CD8-positive, alpha-beta memory T cell (primary cell): ENCODE measurements at regions of chr2 and their contacts with region 1.

Region 1: GRCh38 chr2:134927195-134927594 is 8.6 kb downstream of the CCNT2 start:
- DNase-seq: no peak
- H3K4me3 ChIP-seq: no peak overlapping the region
- H3K4me3 Mint-ChIP-seq: peak overlapping the region in 4 of 7 donors; percentile 10 to 34 (median 31)
- H3K27ac ChIP-seq: no peak overlapping the region
- H3K27ac Mint-ChIP-seq: peak overlapping the region in 1 of 8 donors; percentile 0
- H3K4me1 ChIP-seq: peaks cover 64% of the 10 kb centered on the region
- H3K4me1 Mint-ChIP-seq: peaks cover 72 to 96% (median 94%) of the 10 kb centered on the region in 3 donors
- H3K27me3 ChIP-seq: no peaks in the 10 kb centered on the region
- H3K27me3 Mint-ChIP-seq: no peaks in the 10 kb centered on the region

Region 2: DNA sequence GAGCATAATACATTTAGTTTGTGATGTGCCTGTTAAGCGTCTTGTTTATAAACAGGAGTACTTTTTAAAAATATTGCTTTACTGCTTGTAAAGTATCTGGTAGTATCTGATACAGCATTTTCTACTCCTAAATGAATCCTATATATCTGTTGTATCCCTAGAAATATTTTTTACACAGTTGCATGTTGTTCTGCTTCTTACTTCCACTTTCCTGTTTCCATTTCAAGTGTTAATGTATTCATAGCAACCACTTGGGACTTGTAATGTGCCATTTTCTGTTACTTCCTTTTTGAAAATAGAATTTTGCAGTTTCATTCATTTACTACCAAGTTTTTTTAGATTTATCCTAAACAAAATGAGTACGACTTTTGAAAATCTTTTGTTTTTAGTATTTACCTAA is 16.3 kb after region 1 on chr2:
- CTCF ChIA-PET with region 1: no interaction called
- POLR2A ChIA-PET with region 1: no interaction called
- DNase-seq: no peak
- H3K4me3 ChIP-seq: no peak overlapping the region
- H3K4me3 Mint-ChIP-seq: no peak overlapping the region
- H3K27ac ChIP-seq: no peak overlapping the region
- H3K27ac Mint-ChIP-seq: no peak overlapping the region
- H3K4me1 ChIP-seq: no peaks in the 10 kb centered on the region
- H3K4me1 Mint-ChIP-seq: peaks cover 10 to 45% (median 14%) of the 10 kb centered on the region in 3 donors
- H3K27me3 ChIP-seq: no peaks in the 10 kb centered on the region
- H3K27me3 Mint-ChIP-seq: no peaks in the 10 kb centered on the region

Region 3: DNA sequence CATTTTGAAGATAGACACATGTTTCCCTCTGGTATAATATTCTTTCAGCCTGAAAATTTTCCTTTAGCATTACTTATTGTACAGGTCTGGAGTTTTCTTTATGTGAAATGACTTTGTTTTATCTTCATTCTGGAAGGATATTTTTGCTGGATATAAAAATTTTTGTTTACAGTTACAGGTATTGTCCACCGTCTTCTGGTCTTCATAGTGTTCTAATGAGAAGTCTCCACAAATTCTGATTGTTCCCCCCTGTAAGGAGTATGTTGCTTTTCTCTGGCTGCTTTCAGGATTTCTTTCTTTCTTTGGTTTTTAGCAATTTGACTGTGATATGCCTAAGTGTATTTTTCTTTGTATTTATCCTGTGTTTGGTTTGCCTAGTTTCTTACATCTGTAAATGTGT is 829.5 kb after region 1 on chr2:
- CTCF ChIA-PET with region 1: no interaction called
- POLR2A ChIA-PET with region 1: interaction called, 11 read pairs
- DNase-seq: no peak
- H3K4me3 ChIP-seq: no peak overlapping the region
- H3K4me3 Mint-ChIP-seq: no peak overlapping the region
- H3K27ac ChIP-seq: no peak overlapping the region
- H3K27ac Mint-ChIP-seq: no peak overlapping the region
- H3K4me1 ChIP-seq: no peaks in the 10 kb centered on the region
- H3K4me1 Mint-ChIP-seq: peaks cover 3 to 12% (median 9%) of the 10 kb centered on the region in 3 donors
- H3K27me3 ChIP-seq: no peaks in the 10 kb centered on the region
- H3K27me3 Mint-ChIP-seq: no peaks in the 10 kb centered on the region